ENCODE measurements at regions of chr5 and their contacts with region 1.

Region 1: GRCh38 chr5:54443270-54443669 is 12.2 kb upstream of the HSPB3 start:
- DNase-seq: no peak
- H3K4me3 ChIP-seq: no peak overlapping the region
- H3K27me3 ChIP-seq: peaks cover 1% of the 10 kb centered on the region; the same call in 1 of the 2 replicates
- CTCF ChIP-seq: peak; percentile 49

Region 2: DNA sequence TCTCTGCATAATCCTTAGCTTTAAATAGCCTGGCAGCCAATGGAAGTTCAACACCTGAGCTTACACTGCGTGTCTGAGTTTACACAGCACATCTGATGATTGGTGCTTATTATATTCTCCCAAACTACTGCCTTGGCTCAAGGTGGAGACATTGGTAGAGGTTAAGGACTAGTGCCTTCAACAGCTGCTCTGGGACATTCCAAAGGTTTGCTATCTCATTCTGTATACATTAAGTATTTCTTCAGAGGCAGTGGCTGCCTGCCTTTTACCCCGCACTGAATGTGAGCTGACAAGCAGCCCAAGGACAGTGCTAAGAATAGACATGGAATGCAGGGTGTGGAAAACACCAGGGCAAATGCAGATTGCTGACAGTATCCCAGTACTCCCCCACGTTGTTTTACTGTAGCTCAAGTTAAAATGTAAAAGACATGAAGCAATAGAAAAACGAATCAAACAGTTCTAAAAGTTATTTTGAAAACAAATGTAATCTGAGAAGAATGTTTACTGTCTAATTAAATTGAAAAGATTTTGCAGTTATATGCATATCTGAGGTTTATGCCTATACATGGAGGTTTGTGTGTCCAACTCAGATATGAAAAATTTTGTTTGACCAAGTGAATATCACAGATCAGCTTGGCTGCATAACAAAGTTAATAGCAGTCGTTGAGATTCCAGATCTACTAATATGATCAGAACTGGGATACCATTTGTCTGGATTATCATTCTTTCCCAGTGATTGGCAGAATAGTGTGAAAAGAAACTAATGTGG is 14.0 kb after region 1 on chr5:
- CTCF ChIA-PET with region 1: interaction called, 27 read pairs
- POLR2A ChIA-PET with region 1: interaction called, 3 read pairs
- DNase-seq: peak; percentile 51
- H3K4me3 ChIP-seq: peak overlapping the region; percentile 27
- H3K27me3 ChIP-seq: no peaks in the 10 kb centered on the region
- CTCF ChIP-seq: no peak

Region 3: GRCh38 chr5:54637654-54638053 is 194.4 kb after region 1 on chr5:
- CTCF ChIA-PET with region 1: no interaction called
- POLR2A ChIA-PET with region 1: no interaction called
- DNase-seq: no peak
- H3K4me3 ChIP-seq: no peak overlapping the region
- H3K27me3 ChIP-seq: no peaks in the 10 kb centered on the region
- CTCF ChIP-seq: no peak

Measured in BJ (cell line).